Right ventricle myocardium superior (tissue), 1 donor: ENCODE measurements at regions of chr18 and their contacts with region 1.

Region 1: DNA sequence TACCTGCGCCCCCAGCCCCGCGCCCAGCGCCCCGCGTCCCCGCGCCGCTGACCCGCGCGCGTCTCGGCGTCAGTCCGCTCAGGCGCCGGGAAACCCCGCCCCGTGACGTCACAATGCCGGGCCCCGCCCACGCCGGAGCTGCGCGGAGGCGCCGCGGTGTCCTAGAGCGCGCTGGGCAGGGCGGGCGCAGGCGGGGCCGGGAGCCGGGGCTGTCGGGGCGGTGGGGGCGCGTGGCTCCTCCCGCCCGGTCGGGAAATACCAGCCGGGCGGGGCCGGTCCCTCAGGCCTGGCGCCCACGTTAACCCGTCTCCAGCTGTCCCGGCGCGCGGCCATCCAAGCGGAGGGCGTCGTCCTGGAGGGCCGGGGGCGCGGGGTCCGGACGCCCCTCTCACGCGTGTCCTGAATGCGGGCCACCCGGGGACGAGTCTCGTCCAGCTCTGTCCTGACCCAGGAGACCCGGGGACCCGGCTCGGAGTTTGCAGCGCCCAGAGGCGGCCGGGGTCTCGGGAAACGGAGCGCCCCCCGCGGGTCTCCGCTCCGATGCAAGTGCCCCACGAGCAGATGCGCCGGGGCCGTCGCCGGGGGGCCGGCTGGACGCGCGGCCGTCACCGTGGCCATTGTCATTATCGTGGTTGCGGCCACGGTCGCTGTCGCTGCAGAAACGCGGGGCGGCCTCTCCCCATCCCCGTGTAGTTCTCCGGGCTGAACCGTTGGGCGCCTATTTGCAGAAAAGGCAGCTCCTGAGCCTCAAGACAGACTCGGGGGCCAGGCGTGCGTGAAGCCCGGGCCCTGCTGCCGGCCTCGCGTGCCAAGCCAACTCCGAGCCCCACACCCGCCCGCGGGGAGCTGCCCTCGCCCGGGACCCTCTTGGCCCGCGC is at the start of gene SLC66A2:
- DNase-seq: peak; percentile 97
- ATAC-seq: peak; percentile 93
- total RNA-seq, gene SLC66A2: 25.4 TPM

Region 2: DNA sequence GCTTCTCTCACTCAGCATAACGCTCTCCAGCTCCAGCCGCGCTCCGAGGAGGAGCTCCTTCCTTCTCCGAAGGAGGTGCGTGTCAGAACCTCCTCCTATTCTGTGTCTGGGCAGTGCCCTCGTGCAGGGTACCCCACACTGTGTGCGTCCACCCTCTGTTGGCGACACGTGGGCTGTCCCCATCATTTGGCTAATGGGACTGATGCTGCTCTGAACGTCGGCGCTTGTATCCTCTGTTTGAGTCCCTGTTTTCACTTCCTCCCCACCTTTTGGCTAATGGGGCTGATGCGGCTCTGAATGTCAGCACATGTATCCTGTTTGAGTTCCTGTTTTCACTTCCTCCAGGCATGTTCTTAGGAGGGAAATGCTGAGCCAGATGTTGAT is 131.9 kb before region 1 on chr18:
- intact Hi-C with region 1: no loop called
- DNase-seq: no peak
- ATAC-seq: peak; percentile 64

Region 3: DNA sequence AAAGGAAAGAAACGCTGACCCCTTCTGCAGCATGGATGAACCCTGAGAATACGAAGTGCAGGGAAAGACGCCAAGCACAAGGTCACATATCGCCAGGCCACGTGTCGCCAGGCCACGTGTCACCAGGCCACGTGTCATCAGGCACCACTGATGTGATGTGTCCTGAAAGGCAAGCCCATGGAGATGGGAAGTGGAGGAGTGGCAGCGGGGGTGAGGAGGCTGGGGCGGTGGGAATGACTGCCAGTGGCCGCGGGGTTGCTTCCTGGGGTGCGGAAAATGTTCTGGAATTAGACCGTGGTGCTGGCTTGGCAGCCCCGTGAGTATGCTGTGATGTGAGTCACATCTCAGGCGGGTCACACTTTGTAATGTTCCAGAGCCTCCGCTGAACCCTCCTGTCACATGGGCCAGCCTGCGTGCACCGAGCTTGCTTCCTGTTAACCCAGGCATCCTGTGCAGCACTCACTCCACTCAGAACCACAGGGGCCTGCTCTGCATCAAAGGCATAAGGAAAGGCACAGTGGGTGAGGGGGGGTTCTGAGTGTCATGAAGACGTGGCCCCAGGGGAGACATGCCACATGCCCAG is 39.3 kb before region 1 on chr18:
- intact Hi-C with region 1: no loop called
- DNase-seq: peak; percentile 37
- ATAC-seq: no peak

Region 4: DNA sequence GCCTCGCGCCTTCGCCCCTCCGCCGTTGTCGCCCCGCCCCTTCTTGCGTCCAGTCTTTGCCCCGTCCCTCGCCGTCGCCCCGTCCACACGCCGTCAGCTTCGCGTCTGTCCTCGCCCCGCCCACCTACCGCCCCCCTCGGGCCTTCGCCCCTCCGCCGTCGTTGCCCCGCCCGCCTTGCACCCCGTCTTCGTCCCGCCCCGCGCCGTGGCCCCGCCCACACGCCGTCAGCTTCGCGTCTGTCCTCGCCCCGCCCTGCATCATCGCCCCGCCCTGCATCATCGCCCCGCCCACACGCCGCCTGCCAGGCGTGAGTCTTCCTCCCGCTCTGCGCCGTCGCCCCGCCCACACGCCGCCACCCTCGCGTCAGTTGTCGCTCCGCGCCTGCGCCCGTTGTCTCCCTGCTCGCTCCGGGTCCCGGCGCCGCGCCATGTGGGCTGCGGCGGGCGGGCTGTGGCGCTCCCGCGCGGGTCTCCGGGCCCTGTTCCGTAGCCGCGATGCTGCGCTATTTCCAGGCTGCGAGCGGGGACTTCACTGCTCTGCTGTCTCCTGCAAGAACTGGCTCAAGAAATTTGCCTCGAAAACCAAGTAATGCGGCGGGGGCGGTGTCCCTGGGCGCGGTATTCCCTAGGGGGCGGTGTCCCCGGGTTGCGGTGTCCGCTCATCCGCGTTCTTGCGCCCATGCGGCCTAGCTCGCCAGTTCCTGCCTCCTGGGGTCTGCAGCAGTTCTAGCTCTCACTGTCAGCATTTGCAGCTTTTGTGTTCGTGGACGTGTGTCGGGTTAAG is 82.4 kb after region 1 on chr18 and contains the start of gene RBFA:
- intact Hi-C with region 1: loop called (anchors 10 kb)
- DNase-seq: peak; percentile 100
- ATAC-seq: peak; percentile 95
- total RNA-seq, gene RBFA: 19.1 TPM